ENCODE measurements at regions of chr21 and their contacts with region 1.

Region 1: DNA sequence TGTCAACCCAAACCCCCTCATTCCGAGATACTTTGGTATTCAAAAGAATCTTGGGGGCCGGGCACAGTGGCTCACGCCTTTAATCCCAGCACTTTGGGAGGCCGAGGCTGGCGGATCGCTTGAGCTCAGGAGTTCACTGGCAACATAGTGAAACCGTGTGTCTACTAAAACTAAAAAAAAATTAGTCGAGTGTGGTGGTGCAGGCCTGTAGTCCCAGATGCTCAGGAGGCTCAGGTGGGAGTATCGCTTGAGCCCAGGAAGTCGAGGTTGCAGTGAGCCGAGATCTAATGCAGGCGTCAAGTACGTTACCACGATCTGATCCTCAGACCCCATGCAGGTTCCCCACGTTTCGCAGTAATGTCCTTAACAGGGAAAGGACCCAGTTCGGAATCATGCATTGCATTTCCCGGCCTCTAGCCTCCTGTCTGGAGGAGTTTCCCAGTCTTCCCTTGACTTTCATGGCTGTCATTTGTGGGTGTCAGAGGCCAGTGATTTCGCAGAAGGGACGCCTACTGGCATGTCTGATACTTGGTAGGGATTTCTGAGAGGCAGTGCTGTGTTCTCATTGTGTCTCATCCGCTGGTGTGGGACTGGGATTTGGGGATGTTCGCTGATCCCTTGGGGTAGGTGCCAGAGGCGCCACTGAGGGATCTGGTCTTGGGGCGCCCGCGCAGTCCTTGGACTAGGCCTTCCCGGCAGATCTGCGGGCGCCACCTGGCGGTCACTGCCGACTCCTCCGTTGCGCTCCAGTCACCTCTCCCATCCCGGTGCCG is 39.3 kb upstream of the HMGN1 start:
- DNase-seq: peak; percentile 78 to 98 (median 94)

Region 2: GRCh38 chr21:39183237-39184007 is 204.8 kb before region 1 on chr21 and contains the start of gene PSMG1:
- intact Hi-C with region 1: loop called (anchors 2 kb)
- DNase-seq: peak; percentile 73 to 96 (median 92)

Region 3: GRCh38 chr21:39313571-39314142 is 74.6 kb before region 1 on chr21 and contains the start of gene BRWD1:
- intact Hi-C with region 1: loop called (anchors 2 kb)
- DNase-seq: peak; percentile 26 to 88 (median 78)

Region 4: DNA sequence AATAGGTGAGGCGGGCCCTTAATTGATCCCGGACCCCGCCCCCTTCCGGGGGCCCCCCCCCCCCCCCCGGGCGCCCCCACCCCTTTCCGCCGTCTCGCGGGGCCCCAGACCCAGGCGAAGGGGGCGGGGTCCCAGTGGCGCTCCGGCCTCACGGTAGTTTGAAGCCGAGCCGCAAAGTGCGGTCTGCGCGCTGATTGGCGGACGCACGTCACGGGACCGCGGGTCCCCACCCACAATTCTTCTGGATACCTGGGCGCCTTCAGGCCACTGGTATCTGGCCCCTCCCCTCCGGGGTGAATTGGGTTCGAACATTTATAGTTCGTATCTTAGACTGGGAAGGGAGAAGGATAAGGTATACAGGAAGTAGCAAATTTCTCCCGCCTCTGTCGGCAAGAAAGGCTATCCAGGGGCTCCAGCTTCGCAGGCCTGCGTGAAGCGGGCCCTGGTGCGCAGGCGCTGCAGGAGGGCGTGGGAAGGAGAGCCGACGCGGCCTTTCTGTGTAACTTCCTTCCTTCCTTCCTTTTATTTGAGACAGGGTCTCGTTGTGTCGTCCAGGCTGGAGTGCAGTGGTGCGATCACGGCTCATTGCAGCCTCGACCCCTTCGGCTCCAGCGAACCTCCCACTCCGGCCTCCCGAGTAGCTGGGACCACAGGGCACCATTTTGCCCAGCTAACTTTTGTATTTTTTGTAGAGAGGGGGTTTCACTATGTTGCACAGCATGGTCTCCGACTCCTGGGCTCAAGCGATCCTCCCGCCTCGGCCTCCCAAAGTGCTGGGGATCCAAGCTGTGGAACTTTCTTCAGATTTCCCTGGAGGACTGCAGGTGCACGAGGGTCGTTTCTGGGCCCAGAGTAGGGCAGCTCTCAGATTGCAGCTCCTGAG is 38.8 kb before region 1 on chr21:
- intact Hi-C with region 1: loop called (anchors 5 kb)
- DNase-seq: peak; percentile 92 to 99 (median 97)

Region 5: DNA sequence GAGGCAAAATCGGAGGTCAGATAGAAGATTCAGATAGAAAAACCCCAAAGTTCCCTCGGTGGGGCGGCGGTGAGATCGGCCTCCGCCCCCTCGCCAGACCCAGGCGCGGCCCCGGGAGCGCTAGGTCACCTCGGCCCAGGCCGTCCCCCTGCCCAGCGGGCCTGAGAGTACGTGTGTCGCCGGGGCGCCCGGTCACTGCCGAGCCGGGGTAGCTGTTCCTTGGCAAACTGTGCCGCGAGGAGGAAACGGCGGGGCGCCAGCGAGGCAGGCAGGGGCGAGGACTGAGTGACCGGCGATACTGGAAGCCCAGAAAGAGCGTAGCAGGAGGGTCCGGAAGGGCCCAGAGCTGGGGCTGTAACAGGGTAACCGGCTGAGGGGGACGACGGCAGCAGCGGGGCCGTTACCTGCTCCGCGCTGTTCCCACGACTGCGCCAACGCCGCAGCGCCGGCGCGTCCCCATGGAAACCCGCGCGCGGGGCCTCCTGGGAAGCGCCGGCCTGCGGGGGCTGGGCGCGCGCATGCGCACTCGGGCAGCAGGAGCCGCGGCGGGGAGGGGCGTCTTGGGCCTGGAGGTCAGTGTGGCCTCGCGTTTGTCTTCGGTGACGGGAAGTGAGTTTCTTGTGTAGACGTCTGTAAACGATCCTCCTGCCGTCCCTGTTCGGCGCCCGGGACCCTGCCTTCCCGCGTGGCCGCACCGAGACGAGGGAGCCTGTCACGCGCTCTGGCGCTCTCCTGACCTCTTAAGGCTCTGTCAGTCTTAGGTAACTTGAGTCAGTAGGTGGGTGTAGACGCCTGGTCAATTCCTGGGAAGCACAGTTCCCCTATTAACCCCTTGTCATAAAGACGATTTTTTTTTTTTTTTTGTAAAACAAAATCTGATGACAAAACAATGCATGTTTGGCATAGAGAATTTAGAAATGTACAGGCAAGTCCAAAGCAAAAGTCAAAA is 57.4 kb after region 1 on chr21 and contains the start of gene LCA5L:
- intact Hi-C with region 1: loop called (anchors 2 kb)
- DNase-seq: peak; percentile 62 to 94 (median 86)

Region 6: GRCh38 chr21:39686646-39687468 is 298.6 kb after region 1 on chr21:
- intact Hi-C with region 1: no loop called
- DNase-seq: no peak